Esophagus muscularis mucosa (tissue), 4 donors: ENCODE measurements at regions of chr2 and their contacts with region 1.

Region 1: DNA sequence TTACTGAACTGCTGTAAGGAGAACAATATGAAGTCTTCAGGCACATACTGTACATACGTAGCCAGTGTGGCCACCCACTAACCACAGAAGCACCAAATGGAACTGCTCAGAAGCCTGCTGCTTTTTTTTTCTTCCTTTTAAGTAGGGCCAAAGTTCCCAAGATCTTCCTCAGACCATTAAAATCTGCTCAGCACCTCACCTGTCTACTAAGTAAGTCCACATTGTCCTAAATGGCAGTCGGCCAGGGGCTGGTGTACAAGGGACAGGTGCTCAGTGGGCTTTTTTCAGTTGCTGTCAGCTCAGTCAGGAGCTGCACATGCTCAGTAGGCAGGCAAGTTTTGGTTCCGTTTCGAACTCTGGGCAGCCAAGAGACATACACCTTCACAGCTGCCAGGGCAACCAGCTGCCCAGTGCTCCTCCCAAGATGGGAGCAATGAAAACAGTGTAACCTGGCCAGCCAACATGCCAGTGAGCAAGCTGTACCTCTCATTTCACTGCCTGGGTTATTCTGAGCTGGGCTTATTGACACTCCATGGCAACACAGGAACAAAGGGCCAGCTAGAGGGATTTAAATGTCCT is 86.1 kb downstream of the ACVR1 start:
- DNase-seq: no peak
- H3K4me3 ChIP-seq: no peak overlapping the region
- H3K27ac ChIP-seq: peak overlapping the region; percentile 76 to 79 (median 77)
- H3K4me1 ChIP-seq: peaks cover 72 to 84% (median 80%) of the 10 kb centered on the region in 4 donors
- H3K27me3 ChIP-seq: no peaks in the 10 kb centered on the region
- CTCF ChIP-seq: no peak
- EP300 ChIP-seq: no peak
- POLR2A ChIP-seq: no peak

Region 2: GRCh38 chr2:157825885-157826284 is 35.9 kb after region 1 on chr2:
- intact Hi-C with region 1: loop called (anchors 5 kb)
- DNase-seq: no peak
- H3K4me3 ChIP-seq: no peak overlapping the region
- H3K27ac ChIP-seq: no peak overlapping the region
- H3K4me1 ChIP-seq: peaks cover 21 to 29% (median 24%) of the 10 kb centered on the region in 4 donors
- H3K27me3 ChIP-seq: no peaks in the 10 kb centered on the region
- CTCF ChIP-seq: no peak
- EP300 ChIP-seq: no peak
- POLR2A ChIP-seq: no peak

Region 3: DNA sequence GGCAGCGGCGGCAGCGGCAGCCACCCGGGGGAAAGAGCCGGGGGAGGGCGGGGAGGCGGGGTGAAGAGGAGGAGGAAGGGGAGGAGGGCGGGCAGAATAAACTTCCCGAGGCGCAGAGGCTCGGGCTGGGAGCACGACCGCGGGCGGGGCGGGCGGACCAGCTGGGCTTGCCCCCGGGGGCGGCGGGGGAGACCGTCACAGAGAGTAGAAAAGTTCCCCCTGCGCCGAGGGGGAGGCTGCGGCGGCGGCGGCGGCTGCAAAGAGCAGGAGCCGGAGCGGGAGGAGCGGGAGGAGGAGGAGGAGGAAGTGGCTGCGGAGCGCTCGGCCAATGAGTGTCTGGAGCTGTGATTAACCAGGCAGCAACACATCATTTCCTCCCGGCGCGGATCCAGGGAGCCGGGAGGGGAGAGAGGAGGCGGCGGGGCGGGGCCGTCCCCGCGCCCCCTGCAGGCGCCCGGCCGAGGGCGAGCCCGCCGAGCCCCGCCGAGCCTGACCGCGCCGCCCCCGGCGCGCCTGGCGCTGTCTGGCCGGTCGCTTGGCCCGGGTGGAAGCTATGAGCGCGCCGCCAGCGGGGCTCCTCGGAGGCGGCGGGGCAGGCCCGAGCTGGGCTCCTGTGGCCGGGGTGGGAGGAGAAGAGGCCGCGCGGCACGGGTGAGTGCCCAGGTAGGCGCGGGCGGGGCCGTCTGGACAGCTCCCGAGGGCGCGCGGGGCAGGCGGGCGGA is 86.2 kb after region 1 on chr2 and contains the start of gene ACVR1:
- intact Hi-C with region 1: loop called (anchors 2 kb)
- DNase-seq: peak; percentile 98
- H3K4me3 ChIP-seq: peak within 1 kb of the TSS; percentile 79 to 93 (median 90)
- H3K27ac ChIP-seq: peak within 1 kb of the TSS; percentile 94 to 98 (median 96)
- H3K4me1 ChIP-seq: peaks cover 16 to 49% (median 46%) of the 10 kb centered on the region in 4 donors
- H3K27me3 ChIP-seq: no peaks in the 10 kb centered on the region
- CTCF ChIP-seq: peak; percentile 14 to 53 (median 40)
- EP300 ChIP-seq: no peak
- POLR2A ChIP-seq: peak; percentile 55
- total RNA-seq, gene ACVR1: 25.2 to 39.1 (median 32.3) TPM